ENCODE measurements at regions of chr9 and their contacts with region 1.

Region 1: GRCh38 chr9:109440797-109441287 is 57.3 kb downstream of the PTPN3 start:
- DNase-seq: peak in 1 of 2 donors; percentile 59
- ATAC-seq: peak; percentile 83
- H3K4me3 ChIP-seq: no peak overlapping the region
- H3K27ac ChIP-seq: no peak overlapping the region
- H3K4me1 ChIP-seq: no peaks in the 10 kb centered on the region
- H3K27me3 ChIP-seq: no peaks in the 10 kb centered on the region

Region 2: DNA sequence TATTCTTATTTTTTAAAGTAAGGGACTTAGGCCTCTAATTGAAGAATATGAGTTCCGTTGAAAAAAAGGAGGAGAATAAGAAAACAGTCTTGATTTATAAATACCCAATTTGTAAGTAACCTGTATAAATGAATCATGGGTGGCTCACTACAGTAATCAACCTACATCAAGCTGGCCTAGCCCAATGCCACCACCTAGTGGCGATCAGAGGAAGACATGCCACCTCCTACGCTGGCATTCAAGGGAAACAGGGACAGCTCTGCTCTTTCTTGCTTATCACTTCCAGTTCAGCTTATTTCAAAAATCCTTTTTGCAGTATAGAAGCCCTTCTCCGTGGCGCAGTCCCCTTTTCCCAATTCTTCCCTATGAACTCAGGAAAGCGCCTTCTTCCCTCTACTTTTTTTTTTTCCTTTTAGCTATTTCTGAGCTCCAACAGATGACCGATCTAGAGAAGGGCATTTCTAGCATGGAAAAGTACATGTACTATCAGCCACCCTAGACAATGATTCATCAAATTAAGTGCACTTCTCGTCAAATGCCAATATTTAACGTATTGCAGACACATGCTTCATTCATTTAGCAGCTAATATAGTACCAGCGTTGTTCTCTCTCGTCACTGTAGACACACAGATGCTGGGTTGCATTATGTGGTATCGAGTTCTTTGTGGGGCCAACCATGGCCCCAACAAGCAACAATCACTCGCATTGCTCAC is 29.0 kb after region 1 on chr9:
- intact Hi-C with region 1: loop called (anchors 2 kb)
- DNase-seq: peak; percentile 76 to 83
- ATAC-seq: peak; percentile 83
- H3K4me3 ChIP-seq: no peak overlapping the region
- H3K27ac ChIP-seq: peak overlapping the region in 1 of 2 donors; percentile 25
- H3K4me1 ChIP-seq: peaks cover 3 to 4% of the 10 kb centered on the region in 2 donors
- H3K27me3 ChIP-seq: no peaks in the 10 kb centered on the region

Region 3: DNA sequence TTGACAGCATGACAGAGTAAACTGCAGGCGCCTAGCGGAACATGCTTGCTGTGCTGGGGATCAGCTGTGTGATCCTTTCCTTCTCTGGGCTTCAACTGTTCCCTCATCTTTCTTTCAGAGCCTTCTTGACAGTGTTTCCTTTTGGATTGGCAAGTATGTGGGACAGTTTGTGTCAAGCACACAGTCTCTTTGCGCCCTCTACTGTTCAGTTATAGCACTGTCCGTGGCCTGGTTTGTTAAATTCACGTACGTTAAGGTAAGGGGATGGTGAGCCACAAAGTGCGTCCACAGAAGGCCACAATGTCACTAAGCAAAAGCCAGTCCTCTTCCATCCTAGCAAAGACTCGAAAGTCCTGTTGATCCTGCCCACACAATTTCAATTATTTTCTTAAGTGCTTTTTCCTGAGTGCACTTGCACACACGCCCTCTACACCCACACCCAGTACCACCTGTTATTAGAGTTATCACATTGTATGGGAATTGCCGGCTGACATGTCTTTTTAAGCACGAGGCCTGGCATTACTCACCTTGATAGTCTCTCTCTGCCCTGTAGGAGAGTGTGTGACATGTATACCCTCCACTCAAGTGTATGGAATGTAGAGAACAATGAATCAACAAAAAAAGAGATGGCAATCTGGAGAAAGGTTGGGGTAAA is 79.8 kb after region 1 on chr9:
- intact Hi-C with region 1: loop called (anchors 1 to 2 kb)
- DNase-seq: peak; percentile 56 to 75
- ATAC-seq: peak; percentile 89
- H3K4me3 ChIP-seq: no peak overlapping the region
- H3K27ac ChIP-seq: no peak overlapping the region
- H3K4me1 ChIP-seq: no peaks in the 10 kb centered on the region
- H3K27me3 ChIP-seq: no peaks in the 10 kb centered on the region

Region 4: GRCh38 chr9:109574068-109574882 is 133.4 kb after region 1 on chr9:
- intact Hi-C with region 1: no loop called
- DNase-seq: no peak
- ATAC-seq: peak; percentile 70
- H3K4me3 ChIP-seq: no peak overlapping the region
- H3K27ac ChIP-seq: no peak overlapping the region
- H3K4me1 ChIP-seq: no peaks in the 10 kb centered on the region
- H3K27me3 ChIP-seq: no peaks in the 10 kb centered on the region